PC-9 (cell line): ENCODE measurements at regions of chr1 and their contacts with region 1.

Region 1: GRCh38 chr1:119001181-119002018 is 13.3 kb upstream of the TBX15 start:
- DNase-seq: peak; percentile 33 to 40
- H3K4me3 ChIP-seq: peak overlapping the region; percentile 41; the same call in 1 of the 2 replicates
- H3K27ac ChIP-seq: peak overlapping the region; percentile 63
- H3K4me1 ChIP-seq: peaks cover 13% of the 10 kb centered on the region
- H3K27me3 ChIP-seq: 0 out of 2 replicates have a peak, but pooled peaks cover 4% of the 10 kb centered on the region
- CTCF ChIP-seq: 0 out of 2 replicates have a peak, but pooled peaks have one; percentile 37

Region 2: GRCh38 chr1:119140177-119141019 is 139.0 kb after region 1 on chr1 and contains the start of gene WARS2:
- CTCF ChIA-PET with region 1: no interaction called
- POLR2A ChIA-PET with region 1: no interaction called
- intact Hi-C with region 1: loop called (anchors 5 kb)
- DNase-seq: peak; percentile 96 to 98
- H3K4me3 ChIP-seq: peak within 1 kb of the TSS; percentile 75
- H3K27ac ChIP-seq: peak within 1 kb of the TSS; percentile 96
- H3K4me1 ChIP-seq: peaks cover 31% of the 10 kb centered on the region
- H3K27me3 ChIP-seq: no peaks in the 10 kb centered on the region
- CTCF ChIP-seq: no peak
- total RNA-seq, gene WARS2: 17.6 and 24.2 TPM in 2 replicates

Region 3: DNA sequence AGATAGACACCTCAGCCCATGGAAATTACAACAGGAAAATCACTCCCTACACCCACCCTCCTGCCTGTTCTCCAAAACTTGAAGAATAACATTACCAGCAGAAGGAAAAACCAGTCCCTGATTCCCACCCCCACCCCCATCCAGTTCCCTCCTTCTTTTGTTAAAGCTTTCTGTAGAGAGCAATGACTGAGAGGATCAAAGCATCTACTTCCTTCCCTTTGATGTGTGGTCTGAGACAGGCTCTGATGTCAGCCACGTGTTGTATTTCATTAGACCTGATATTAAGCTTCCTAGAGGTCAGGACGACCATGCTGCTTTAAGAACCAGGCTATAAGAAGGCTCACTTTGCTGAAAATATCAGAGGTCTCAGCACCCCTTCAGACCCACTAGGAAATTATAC is 293.3 kb after region 1 on chr1:
- CTCF ChIA-PET with region 1: no interaction called
- POLR2A ChIA-PET with region 1: no interaction called
- intact Hi-C with region 1: no loop called
- DNase-seq: no peak
- H3K4me3 ChIP-seq: no peak overlapping the region
- H3K27ac ChIP-seq: no peak overlapping the region
- H3K4me1 ChIP-seq: no peaks in the 10 kb centered on the region
- H3K27me3 ChIP-seq: peaks cover 7% of the 10 kb centered on the region; the same call in 1 of the 2 replicates
- CTCF ChIP-seq: no peak